ENCODE measurements at regions of chr3 and their contacts with region 1.

Region 1: DNA sequence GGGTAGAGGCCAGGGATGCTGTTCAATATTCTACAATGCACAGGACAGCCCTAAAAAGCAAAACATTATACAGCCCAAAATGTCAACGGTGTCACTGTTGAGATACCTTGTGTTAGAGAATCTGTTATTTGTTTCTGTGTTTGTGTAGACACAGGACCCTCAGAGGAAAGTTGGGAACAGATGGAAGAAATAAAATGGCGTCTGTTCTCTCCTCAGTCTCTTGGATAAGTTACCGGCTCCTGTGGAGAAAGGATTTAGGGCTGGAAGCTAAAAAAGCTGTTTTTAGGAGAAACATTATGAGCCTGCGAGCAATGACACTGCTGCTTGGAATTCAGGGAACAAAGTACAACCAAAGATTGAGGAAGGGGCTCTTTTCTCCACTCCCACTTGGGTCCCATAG is 688.6 kb upstream of the ZNF385D start:
- DNase-seq: no peak
- ATAC-seq: no peak
- H3K4me3 ChIP-seq: no peak overlapping the region
- H3K4me3 Mint-ChIP-seq: no peak overlapping the region
- H3K27ac ChIP-seq: no peak overlapping the region
- H3K27ac Mint-ChIP-seq: no peak overlapping the region
- H3K4me1 ChIP-seq: no peaks in the 10 kb centered on the region
- H3K4me1 Mint-ChIP-seq: no peaks in the 10 kb centered on the region
- H3K27me3 ChIP-seq: no peaks in the 10 kb centered on the region
- H3K27me3 Mint-ChIP-seq: no peaks in the 10 kb centered on the region

Region 2: GRCh38 chr3:22098014-22098413 is 341.6 kb before region 1 on chr3:
- CTCF ChIA-PET with region 1: interaction called in 1 of 2 experiments, 11 read pairs
- POLR2A ChIA-PET with region 1: no interaction called
- DNase-seq: no peak
- ATAC-seq: no peak
- H3K4me3 ChIP-seq: no peak overlapping the region
- H3K4me3 Mint-ChIP-seq: no peak overlapping the region
- H3K27ac ChIP-seq: no peak overlapping the region
- H3K27ac Mint-ChIP-seq: no peak overlapping the region
- H3K4me1 ChIP-seq: no peaks in the 10 kb centered on the region
- H3K4me1 Mint-ChIP-seq: no peaks in the 10 kb centered on the region
- H3K27me3 ChIP-seq: no peaks in the 10 kb centered on the region
- H3K27me3 Mint-ChIP-seq: no peaks in the 10 kb centered on the region

Region 3: GRCh38 chr3:22421590-22421989 is 18.0 kb before region 1 on chr3:
- CTCF ChIA-PET with region 1: no interaction called
- POLR2A ChIA-PET with region 1: no interaction called
- DNase-seq: no peak
- ATAC-seq: no peak
- H3K4me3 ChIP-seq: no peak overlapping the region
- H3K4me3 Mint-ChIP-seq: no peak overlapping the region
- H3K27ac ChIP-seq: no peak overlapping the region
- H3K27ac Mint-ChIP-seq: no peak overlapping the region
- H3K4me1 ChIP-seq: no peaks in the 10 kb centered on the region
- H3K4me1 Mint-ChIP-seq: no peaks in the 10 kb centered on the region
- H3K27me3 ChIP-seq: no peaks in the 10 kb centered on the region
- H3K27me3 Mint-ChIP-seq: no peaks in the 10 kb centered on the region